ENCODE measurements at regions of chr12 and their contacts with region 1.

Region 1: DNA sequence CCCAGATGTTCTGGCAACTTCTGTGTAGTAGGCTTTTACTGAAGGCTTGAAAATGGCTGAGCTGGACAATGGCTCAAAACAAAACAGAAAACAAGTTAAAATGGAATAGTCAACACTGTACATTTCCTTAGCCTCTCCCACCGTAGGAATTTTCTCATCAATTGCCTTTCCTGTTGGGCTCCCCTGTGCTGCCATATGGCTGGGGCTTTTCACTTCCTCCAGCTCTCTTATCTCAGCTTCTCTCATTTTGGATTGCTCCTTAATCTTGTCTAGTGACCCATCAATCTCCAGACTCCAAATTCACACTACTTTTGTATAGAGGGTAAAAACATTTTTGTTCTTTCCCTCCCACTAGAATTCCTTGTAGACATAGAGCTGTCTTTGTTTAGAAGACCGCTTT is 50.4 kb upstream of the RPH3A start:
- DNase-seq: no peak
- H3K4me3 ChIP-seq: no peak overlapping the region
- H3K27ac ChIP-seq: no peak overlapping the region
- H3K4me1 ChIP-seq: no peaks in the 10 kb centered on the region
- H3K27me3 ChIP-seq: peaks cover 75% of the 10 kb centered on the region
- CTCF ChIP-seq: no peak

Region 2: GRCh38 chr12:112543751-112544150 is 197.4 kb before region 1 on chr12:
- CTCF ChIA-PET with region 1: no interaction called
- POLR2A ChIA-PET with region 1: interaction called, 26 read pairs
- intact Hi-C with region 1: no loop called
- DNase-seq: no peak
- H3K4me3 ChIP-seq: no peak overlapping the region
- H3K27ac ChIP-seq: no peak overlapping the region
- H3K4me1 ChIP-seq: no peaks in the 10 kb centered on the region
- H3K27me3 ChIP-seq: peaks cover 46% of the 10 kb centered on the region
- CTCF ChIP-seq: no peak

Measured in PC-9 (cell line).